ENCODE measurements at regions of chr5 and their contacts with region 1.

Region 1: DNA sequence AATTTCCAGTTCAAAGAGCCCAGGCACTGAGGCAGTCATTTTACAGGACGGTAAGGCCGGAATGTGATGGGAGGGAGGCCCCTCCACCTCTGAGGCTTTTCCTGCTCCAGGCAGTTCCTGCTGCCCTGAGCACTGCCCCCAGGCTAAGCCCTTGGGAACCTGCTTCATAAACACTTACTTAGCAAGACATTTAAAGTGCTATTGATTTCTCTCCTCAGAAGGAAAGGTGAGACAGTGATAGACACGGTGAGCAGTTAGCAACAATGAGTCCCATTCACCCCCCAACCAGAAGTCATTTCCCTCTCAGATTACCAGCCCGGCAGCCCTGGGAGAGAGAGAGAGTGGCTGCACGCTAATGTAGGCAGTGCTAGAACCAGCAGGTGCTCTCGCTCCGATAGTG is 462.5 kb downstream of the SPOCK1 start:
- DNase-seq: peak; percentile 86
- H3K4me3 Mint-ChIP-seq: peak overlapping the region; percentile 16
- H3K27ac Mint-ChIP-seq: peak overlapping the region; percentile 60
- H3K4me1 Mint-ChIP-seq: peaks cover 44% of the 10 kb centered on the region
- H3K27me3 Mint-ChIP-seq: no peaks in the 10 kb centered on the region
- CTCF ChIP-seq: no peak

Region 2: DNA sequence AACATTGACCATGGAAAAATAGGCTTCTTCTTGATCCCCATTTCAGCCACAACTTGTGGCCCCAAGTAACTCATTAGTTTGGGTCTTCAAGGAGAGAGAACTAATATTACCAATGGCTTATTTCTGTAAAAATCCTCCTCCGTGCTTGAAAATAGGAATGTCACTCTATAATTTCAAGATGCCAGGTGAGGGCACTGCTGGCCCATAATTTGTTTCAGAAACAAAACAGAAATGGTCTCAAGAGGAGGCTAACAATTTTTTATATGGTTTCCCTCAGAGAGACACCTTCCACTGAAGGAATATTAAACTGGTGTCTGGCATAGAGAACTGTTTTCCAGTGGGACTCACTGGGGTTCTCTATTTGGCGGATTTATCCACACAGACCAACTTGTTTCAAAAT is 234.3 kb before region 1 on chr5:
- CTCF ChIA-PET with region 1: no interaction called
- intact Hi-C with region 1: loop called (anchors 5 kb)
- DNase-seq: peak; percentile 44
- H3K4me3 Mint-ChIP-seq: no peak overlapping the region
- H3K27ac Mint-ChIP-seq: no peak overlapping the region
- H3K4me1 Mint-ChIP-seq: no peaks in the 10 kb centered on the region
- H3K27me3 Mint-ChIP-seq: peaks cover 34% of the 10 kb centered on the region
- CTCF ChIP-seq: no peak

Region 3: DNA sequence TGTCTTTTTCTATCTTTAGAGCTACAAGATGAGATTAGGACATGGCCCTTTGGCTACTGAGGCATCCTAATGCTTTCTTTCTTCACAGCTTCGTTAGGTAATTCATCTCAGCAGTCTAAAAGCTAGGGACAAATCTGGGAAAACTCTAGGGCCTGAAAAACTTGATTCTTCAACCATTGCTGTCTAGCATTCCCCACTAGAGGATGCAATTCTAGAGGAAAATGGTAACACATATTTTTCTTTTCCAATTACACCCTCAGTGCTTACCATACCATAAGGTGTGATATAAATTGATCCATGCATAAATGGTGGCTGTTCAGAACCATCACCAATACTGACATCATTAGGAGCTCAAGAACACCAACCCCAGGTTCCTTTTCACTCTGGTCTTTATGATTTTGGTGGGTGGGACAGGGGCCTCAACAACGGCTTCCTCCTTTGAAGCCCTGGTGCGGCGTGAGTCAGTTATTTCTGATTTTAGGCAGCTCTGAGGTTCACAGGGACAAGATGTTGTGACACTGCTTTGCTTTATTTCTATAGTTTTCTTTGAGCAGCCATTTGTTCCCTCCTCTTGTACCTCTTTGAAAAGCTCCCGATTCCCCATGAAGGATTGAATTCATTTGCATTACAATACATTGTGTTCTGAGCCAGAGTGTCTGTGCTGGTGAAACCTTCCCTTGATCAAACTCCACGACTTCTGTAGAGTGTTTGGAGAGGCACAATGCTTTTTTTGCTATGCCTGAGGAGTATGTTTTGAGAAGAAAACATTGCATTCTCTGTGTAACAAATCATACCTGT is 145.3 kb before region 1 on chr5:
- CTCF ChIA-PET with region 1: no interaction called
- intact Hi-C with region 1: loop called (anchors 5 kb)
- DNase-seq: no peak
- H3K4me3 Mint-ChIP-seq: no peak overlapping the region
- H3K27ac Mint-ChIP-seq: no peak overlapping the region
- H3K4me1 Mint-ChIP-seq: no peaks in the 10 kb centered on the region
- H3K27me3 Mint-ChIP-seq: peaks cover 34% of the 10 kb centered on the region
- CTCF ChIP-seq: no peak

Region 4: DNA sequence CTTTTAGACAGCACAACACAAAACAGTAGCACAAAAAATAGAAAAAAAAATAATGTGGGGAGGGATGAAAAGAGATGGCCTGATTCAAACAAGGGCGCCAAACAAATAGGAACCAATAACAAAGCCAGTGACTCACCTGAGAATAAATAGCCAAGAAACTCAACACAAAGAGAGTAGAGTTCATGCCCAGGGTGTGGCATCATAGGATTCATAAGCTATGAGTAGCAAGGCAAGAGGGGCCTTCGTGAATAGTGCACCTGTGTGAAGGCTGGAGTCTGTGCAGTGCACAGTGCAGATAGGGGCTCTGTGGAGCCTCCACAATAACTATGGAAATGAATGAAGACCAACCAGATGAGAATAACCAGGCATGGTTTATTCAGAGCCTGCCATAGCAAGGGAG is 79.2 kb before region 1 on chr5:
- CTCF ChIA-PET with region 1: interaction called, 3 read pairs
- intact Hi-C with region 1: loop called (anchors 5 kb)
- DNase-seq: peak; percentile 77
- H3K4me3 Mint-ChIP-seq: peak overlapping the region; percentile 15
- H3K27ac Mint-ChIP-seq: peak overlapping the region; percentile 65
- H3K4me1 Mint-ChIP-seq: peaks cover 68% of the 10 kb centered on the region
- H3K27me3 Mint-ChIP-seq: no peaks in the 10 kb centered on the region
- CTCF ChIP-seq: no peak

Region 5: DNA sequence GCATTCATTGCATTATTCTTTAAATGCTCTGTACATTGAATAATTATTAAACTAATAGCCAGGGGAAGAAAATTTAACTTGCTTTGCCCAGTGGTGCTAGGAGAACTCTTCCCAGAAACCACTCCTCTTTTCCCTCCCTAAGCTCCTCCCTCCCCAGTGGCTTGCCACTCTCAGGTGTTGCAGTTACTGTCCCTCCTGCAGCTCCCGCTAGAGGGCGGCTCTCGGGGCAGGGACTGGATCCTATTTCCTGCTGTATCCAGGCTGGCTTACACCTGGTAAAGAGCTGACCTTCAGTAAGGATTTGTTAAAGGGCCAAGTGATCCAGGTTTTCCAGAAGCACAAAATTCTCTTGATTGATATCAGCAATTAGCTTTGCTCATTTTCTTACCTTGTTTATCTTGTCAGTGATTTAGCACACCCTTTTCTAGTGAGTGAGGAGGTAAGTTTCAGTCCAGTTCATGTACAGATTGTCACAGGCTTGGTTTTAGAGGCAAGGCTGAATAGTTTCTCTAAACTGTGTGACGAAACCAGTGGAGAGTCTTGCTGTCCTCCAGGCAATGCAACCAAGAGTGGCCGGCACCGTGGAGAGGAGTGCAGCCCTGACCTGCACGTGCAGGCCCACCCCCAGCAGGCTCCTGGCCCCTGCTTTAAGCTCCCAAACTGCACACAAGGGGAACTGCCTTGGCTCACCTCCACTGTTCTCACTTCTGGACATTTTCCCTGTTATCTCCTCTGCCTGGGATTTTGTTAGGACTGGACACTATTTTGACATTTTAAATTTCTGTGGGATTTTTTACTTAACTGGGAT is 38.7 kb after region 1 on chr5:
- CTCF ChIA-PET with region 1: interaction called, 11 read pairs
- intact Hi-C with region 1: no loop called
- DNase-seq: peak; percentile 96
- H3K4me3 Mint-ChIP-seq: no peak overlapping the region
- H3K27ac Mint-ChIP-seq: no peak overlapping the region
- H3K4me1 Mint-ChIP-seq: peaks cover 61% of the 10 kb centered on the region
- H3K27me3 Mint-ChIP-seq: no peaks in the 10 kb centered on the region
- CTCF ChIP-seq: peak; percentile 87

Region 6: GRCh38 chr5:137105351-137106035 is 68.9 kb after region 1 on chr5:
- CTCF ChIA-PET with region 1: no interaction called
- intact Hi-C with region 1: no loop called
- DNase-seq: no peak
- H3K4me3 Mint-ChIP-seq: no peak overlapping the region
- H3K27ac Mint-ChIP-seq: no peak overlapping the region
- H3K4me1 Mint-ChIP-seq: no peaks in the 10 kb centered on the region
- H3K27me3 Mint-ChIP-seq: peaks cover 14% of the 10 kb centered on the region
- CTCF ChIP-seq: no peak

Region 7: GRCh38 chr5:137214446-137215189 is 178.0 kb after region 1 on chr5:
- CTCF ChIA-PET with region 1: interaction called, 3 read pairs
- intact Hi-C with region 1: loop called (anchors 2 kb)
- DNase-seq: no peak
- H3K4me3 Mint-ChIP-seq: peak overlapping the region; percentile 5
- H3K27ac Mint-ChIP-seq: peak overlapping the region; percentile 30
- H3K4me1 Mint-ChIP-seq: peaks cover 72% of the 10 kb centered on the region
- H3K27me3 Mint-ChIP-seq: peaks cover 29% of the 10 kb centered on the region
- CTCF ChIP-seq: no peak

Measured in Calu3 (cell line).